GM10248 (cell line): ENCODE measurements at regions of chr4 and their contacts with region 1.

Region 1: GRCh38 chr4:26330186-26330787 is 9.5 kb downstream of the RBPJ start:
- DNase-seq: peak; percentile 53
- CTCF ChIP-seq: peak; percentile 62

Region 2: GRCh38 chr4:26028793-26029567 is 301.3 kb before region 1 on chr4:
- CTCF ChIA-PET with region 1: interaction called, 29 read pairs
- POLR2A ChIA-PET with region 1: no interaction called
- DNase-seq: peak; percentile 87
- CTCF ChIP-seq: peak; percentile 97

Region 3: GRCh38 chr4:26342328-26343037 is 12.2 kb after region 1 on chr4:
- CTCF ChIA-PET with region 1: interaction called, 108 read pairs
- POLR2A ChIA-PET with region 1: no interaction called
- DNase-seq: no peak
- CTCF ChIP-seq: no peak

Region 4: DNA sequence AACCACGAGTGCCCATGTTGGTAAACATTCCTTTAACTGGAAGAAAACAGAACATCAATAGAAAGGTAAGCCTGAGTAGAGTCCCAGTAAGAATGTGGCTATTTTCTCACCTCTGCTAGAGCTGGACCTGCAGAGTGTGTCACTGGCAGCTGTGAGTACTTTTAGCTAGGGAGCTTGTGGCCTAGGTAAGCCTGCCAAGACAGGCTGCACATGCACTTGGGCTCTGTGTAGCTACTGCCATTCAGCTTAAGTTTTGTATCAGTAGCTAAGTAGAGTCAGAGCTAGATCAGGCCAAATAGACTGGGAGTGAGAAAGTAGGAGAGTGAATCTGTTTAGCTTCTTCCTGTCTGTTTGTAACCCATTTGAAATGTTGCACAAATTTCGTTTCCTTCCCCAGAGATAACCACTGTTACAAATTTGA is 25.8 kb after region 1 on chr4:
- CTCF ChIA-PET with region 1: interaction called, 52 read pairs
- POLR2A ChIA-PET with region 1: no interaction called
- DNase-seq: no peak
- CTCF ChIP-seq: no peak

Region 5: GRCh38 chr4:26402458-26402857 is 72.2 kb after region 1 on chr4:
- CTCF ChIA-PET with region 1: interaction called, 90 read pairs
- POLR2A ChIA-PET with region 1: no interaction called
- DNase-seq: peak; percentile 14
- CTCF ChIP-seq: no peak

Region 6: GRCh38 chr4:26418107-26418506 is 87.8 kb after region 1 on chr4:
- CTCF ChIA-PET with region 1: interaction called, 90 read pairs
- POLR2A ChIA-PET with region 1: no interaction called
- DNase-seq: no peak
- CTCF ChIP-seq: no peak